Psoas muscle (tissue), 8 donors: ENCODE measurements at regions of chrX and their contacts with region 1.

Region 1: GRCh38 chrX:20315140-20315539 is 48.4 kb upstream of the RPS6KA3 start:
- DNase-seq: no peak
- ATAC-seq: peak; percentile 32 to 61 (median 45)
- H3K4me3 ChIP-seq: no peak overlapping the region
- H3K27ac ChIP-seq: peak overlapping the region; percentile 59
- H3K4me1 ChIP-seq: peaks cover 8% of the 10 kb centered on the region
- H3K27me3 ChIP-seq: no peaks in the 10 kb centered on the region
- CTCF ChIP-seq: no peak

Region 2: DNA sequence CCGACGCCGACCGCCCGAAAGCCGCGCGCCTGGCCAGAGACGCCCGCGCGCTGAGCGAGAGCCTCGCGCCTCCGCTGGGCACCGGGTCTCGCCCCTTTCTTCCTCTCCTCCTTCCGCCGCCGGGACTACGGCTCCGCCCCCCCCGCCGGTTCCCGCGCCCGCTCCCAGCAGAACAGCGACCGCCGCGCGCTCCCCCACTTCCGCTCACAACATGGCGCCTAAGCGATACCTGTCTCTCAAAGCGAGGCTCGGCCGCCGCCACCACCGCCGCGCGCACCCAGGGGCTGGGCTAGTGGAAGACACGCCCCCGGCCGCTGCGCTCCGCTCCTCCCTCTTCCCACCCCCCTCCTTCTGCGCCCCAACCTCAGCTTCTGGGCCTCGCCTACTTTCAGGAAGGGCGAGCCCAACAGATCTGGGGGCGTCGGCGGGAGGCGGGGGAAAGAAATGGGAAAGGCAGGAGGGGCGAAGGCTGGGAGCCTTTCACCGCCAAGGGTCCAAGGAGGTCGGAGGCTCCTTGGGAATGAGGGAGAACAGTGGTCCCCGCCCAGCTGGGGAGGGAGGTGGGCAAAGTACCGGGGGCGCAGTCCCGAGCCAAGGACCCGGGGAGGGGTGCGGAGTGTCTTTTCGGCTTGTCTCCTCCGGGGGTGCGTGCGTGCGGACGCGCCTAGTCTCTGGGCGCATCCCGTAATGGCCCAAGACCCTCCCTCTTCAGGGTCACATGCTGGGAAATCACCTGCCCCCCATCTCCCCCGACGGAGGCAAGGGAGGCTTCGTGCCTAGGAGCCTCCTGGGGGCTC is 48.1 kb before region 1 on chrX and contains the start of gene RPS6KA3:
- intact Hi-C with region 1: loop called in 1 of 2 experiments (anchors 10 kb)
- DNase-seq: peak; percentile 88 to 94
- ATAC-seq: peak; percentile 88 to 93 (median 90)
- H3K4me3 ChIP-seq: peak within 1 kb of the TSS; percentile 74
- H3K27ac ChIP-seq: peak within 1 kb of the TSS; percentile 89
- H3K4me1 ChIP-seq: peaks cover 7% of the 10 kb centered on the region
- H3K27me3 ChIP-seq: no peaks in the 10 kb centered on the region
- CTCF ChIP-seq: no peak
- total RNA-seq, gene RPS6KA3: 56.4 to 91.9 (median 77.2) TPM